ENCODE measurements at regions of chr14 and their contacts with region 1.

Region 1: GRCh38 chr14:34331728-34332623 is 130.1 kb downstream of the SPTSSA start:
- DNase-seq: peak; percentile 70
- ATAC-seq: peak; percentile 90

Region 2: GRCh38 chr14:34496679-34497513 is 164.9 kb after region 1 on chr14:
- intact Hi-C with region 1: loop called (anchors 10 kb)
- DNase-seq: peak; percentile 89
- ATAC-seq: peak; percentile 91